HCT116 (cell line): ENCODE measurements at regions of chr6 and their contacts with region 1.

Region 1: GRCh38 chr6:20564269-20564668 is 30.0 kb downstream of the CDKAL1 start:
- DNase-seq: peak; percentile 19
- ATAC-seq: no peak
- H3K4me3 ChIP-seq: no peak overlapping the region
- H3K27ac ChIP-seq: no peak overlapping the region
- H3K4me1 ChIP-seq: no peaks in the 10 kb centered on the region
- H3K27me3 ChIP-seq: no peaks in the 10 kb centered on the region
- CTCF ChIP-seq: peak; percentile 40 to 76 (median 62); a peak in 5 of 6 replicates
- POLR2A ChIP-seq: no peak
- RAD21 ChIP-seq: peak; percentile 78

Region 2: GRCh38 chr6:20286968-20287565 is 277.2 kb before region 1 on chr6:
- CTCF ChIA-PET with region 1: no interaction called
- POLR2A ChIA-PET with region 1: no interaction called
- RAD21 ChIA-PET with region 1: no interaction called
- intact Hi-C with region 1: no loop called
- DNase-seq: no peak
- ATAC-seq: no peak
- H3K4me3 ChIP-seq: no peak overlapping the region
- H3K27ac ChIP-seq: no peak overlapping the region
- H3K4me1 ChIP-seq: peaks cover 3 to 15% of the 10 kb centered on the region in 2 experiments; a peak in 3 of 4 replicates
- H3K27me3 ChIP-seq: no peaks in the 10 kb centered on the region
- CTCF ChIP-seq: no peak
- POLR2A ChIP-seq: no peak
- RAD21 ChIP-seq: no peak

Region 3: GRCh38 chr6:20548264-20548663 is 16.0 kb before region 1 on chr6:
- CTCF ChIA-PET with region 1: interaction called, 57 read pairs
- POLR2A ChIA-PET with region 1: no interaction called
- RAD21 ChIA-PET with region 1: no interaction called
- intact Hi-C with region 1: no loop called
- DNase-seq: no peak
- ATAC-seq: no peak
- H3K4me3 ChIP-seq: no peak overlapping the region
- H3K27ac ChIP-seq: no peak overlapping the region
- H3K4me1 ChIP-seq: peaks cover under 1 to 3% of the 10 kb centered on the region in 2 experiments; a peak in 2 of 4 replicates
- H3K27me3 ChIP-seq: no peaks in the 10 kb centered on the region
- CTCF ChIP-seq: no peak
- POLR2A ChIP-seq: no peak
- RAD21 ChIP-seq: no peak

Region 4: GRCh38 chr6:20877008-20877937 is 313.0 kb after region 1 on chr6:
- CTCF ChIA-PET with region 1: interaction called, 15 read pairs
- POLR2A ChIA-PET with region 1: no interaction called
- RAD21 ChIA-PET with region 1: interaction called in 1 of 2 experiments, 3 read pairs
- intact Hi-C with region 1: loop called (anchors 2 kb)
- DNase-seq: peak; percentile 95
- ATAC-seq: peak; percentile 95
- H3K4me3 ChIP-seq: peak overlapping the region in 1 of 2 experiments; percentile 27; a peak in 2 of 4 replicates
- H3K27ac ChIP-seq: peak overlapping the region; percentile 95
- H3K4me1 ChIP-seq: peaks cover 49 to 66% of the 10 kb centered on the region in 2 experiments
- H3K27me3 ChIP-seq: no peaks in the 10 kb centered on the region
- CTCF ChIP-seq: no peak
- POLR2A ChIP-seq: no peak
- RAD21 ChIP-seq: peak; percentile 59

Region 5: GRCh38 chr6:20939161-20939775 is 375.0 kb after region 1 on chr6:
- CTCF ChIA-PET with region 1: no interaction called
- POLR2A ChIA-PET with region 1: no interaction called
- RAD21 ChIA-PET with region 1: no interaction called
- intact Hi-C with region 1: loop called (anchors 5 kb)
- DNase-seq: no peak
- ATAC-seq: no peak
- H3K4me3 ChIP-seq: no peak overlapping the region
- H3K27ac ChIP-seq: no peak overlapping the region
- H3K4me1 ChIP-seq: peaks cover under 1 to 13% of the 10 kb centered on the region in 2 experiments; a peak in 2 of 4 replicates
- H3K27me3 ChIP-seq: no peaks in the 10 kb centered on the region
- CTCF ChIP-seq: no peak
- POLR2A ChIP-seq: no peak
- RAD21 ChIP-seq: no peak

Region 6: DNA sequence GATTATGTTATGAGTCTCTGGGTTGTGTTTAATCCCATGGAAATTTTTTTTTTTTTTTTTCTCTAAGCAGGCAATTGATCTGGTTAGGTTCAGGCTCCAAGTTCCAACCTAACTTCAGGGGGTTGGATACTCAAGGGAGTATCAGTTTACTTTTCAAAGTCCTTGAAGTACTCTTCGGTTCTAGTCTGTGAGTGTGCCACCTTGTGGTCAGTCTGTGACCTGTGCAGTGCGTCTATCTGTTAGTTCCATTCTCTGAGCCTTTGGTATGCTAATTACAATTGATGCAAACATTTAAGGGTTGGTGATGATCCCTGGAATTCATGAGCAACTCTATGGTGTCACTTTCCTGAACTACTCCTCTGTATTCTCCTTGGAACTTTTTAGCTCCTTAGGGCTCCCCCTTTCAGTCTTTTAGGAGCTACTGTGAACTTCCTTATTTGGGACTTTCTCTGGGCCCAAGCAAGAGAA is 1371.3 kb after region 1 on chr6:
- CTCF ChIA-PET with region 1: no interaction called
- POLR2A ChIA-PET with region 1: no interaction called
- RAD21 ChIA-PET with region 1: no interaction called
- intact Hi-C with region 1: loop called (anchors 5 kb)
- DNase-seq: peak; percentile 27
- ATAC-seq: peak; percentile 95
- H3K4me3 ChIP-seq: no peak overlapping the region
- H3K27ac ChIP-seq: no peak overlapping the region
- H3K4me1 ChIP-seq: no peaks in the 10 kb centered on the region
- H3K27me3 ChIP-seq: no peaks in the 10 kb centered on the region
- CTCF ChIP-seq: peak; percentile 43 to 84 (median 78); a peak in 5 of 6 replicates
- POLR2A ChIP-seq: no peak
- RAD21 ChIP-seq: peak; percentile 65